ENCODE measurements at regions of chr18 and their contacts with region 1.

Region 1: GRCh38 chr18:830315-830901 is 18.4 kb upstream of the YES1 start:
- DNase-seq: no peak
- ATAC-seq: peak; percentile 45
- H3K4me3 Mint-ChIP-seq: peak overlapping the region; percentile 15
- H3K27ac Mint-ChIP-seq: peak overlapping the region; percentile 66
- H3K4me1 Mint-ChIP-seq: peaks cover 22% of the 10 kb centered on the region
- H3K27me3 Mint-ChIP-seq: peaks cover 7% of the 10 kb centered on the region
- CTCF ChIP-seq: no peak

Region 2: DNA sequence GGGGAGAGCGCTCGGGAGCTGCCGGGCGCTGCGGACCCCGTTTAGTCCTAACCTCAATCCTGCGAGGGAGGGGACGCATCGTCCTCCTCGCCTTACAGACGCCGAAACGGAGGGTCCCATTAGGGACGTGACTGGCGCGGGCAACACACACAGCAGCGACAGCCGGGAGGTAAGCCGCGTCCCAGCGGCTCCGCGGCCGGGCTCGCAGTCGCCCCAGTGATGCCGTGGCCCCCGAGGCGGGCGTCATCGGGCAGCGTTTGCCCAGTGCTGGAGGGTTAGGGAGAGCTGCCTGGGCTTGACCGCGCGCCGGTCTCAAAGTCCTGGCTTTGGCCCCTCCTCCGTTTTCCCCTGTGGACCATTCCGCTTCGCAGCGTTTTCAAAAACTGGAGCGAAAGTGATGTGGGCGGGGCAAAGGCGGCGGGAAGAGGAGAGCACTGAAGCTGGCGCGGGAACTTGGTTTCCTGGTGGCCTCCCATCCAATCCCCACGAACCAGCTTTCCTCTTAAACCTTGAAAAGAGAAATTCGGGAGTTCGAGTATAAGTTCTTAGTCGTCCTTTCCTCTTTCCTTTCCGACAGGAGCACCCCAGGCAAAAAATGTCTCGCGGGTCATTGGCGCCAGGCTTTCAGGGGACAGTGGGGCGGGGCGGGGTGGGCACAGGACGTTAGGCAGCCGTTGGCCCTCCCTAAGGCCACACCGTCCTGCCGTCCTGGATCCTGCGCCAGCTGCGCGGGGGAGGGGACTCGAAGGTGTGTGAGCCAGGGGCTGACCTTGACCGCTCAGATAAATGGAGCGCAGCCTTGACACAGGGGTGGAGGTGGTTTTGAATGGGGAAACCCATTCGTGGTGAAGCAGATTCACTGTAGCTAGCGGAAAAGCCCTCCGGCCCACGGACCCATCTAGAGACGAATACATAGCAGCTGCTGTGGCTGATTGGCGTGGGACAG is 172.1 kb before region 1 on chr18:
- CTCF ChIA-PET with region 1: interaction called, 10 read pairs
- POLR2A ChIA-PET with region 1: no interaction called
- DNase-seq: peak; percentile 90
- ATAC-seq: peak; percentile 80
- H3K4me3 Mint-ChIP-seq: peak overlapping the region; percentile 88
- H3K27ac Mint-ChIP-seq: peak overlapping the region; percentile 76
- H3K4me1 Mint-ChIP-seq: peaks cover 40% of the 10 kb centered on the region
- H3K27me3 Mint-ChIP-seq: no peaks in the 10 kb centered on the region
- CTCF ChIP-seq: no peak

Region 3: GRCh38 chr18:686339-687111 is 143.9 kb before region 1 on chr18:
- CTCF ChIA-PET with region 1: interaction called, 30 read pairs
- POLR2A ChIA-PET with region 1: no interaction called
- DNase-seq: peak; percentile 54
- ATAC-seq: peak; percentile 88
- H3K4me3 Mint-ChIP-seq: peak overlapping the region; percentile 30
- H3K27ac Mint-ChIP-seq: peak overlapping the region; percentile 44
- H3K4me1 Mint-ChIP-seq: peaks cover 35% of the 10 kb centered on the region
- H3K27me3 Mint-ChIP-seq: no peaks in the 10 kb centered on the region
- CTCF ChIP-seq: no peak

Region 4: DNA sequence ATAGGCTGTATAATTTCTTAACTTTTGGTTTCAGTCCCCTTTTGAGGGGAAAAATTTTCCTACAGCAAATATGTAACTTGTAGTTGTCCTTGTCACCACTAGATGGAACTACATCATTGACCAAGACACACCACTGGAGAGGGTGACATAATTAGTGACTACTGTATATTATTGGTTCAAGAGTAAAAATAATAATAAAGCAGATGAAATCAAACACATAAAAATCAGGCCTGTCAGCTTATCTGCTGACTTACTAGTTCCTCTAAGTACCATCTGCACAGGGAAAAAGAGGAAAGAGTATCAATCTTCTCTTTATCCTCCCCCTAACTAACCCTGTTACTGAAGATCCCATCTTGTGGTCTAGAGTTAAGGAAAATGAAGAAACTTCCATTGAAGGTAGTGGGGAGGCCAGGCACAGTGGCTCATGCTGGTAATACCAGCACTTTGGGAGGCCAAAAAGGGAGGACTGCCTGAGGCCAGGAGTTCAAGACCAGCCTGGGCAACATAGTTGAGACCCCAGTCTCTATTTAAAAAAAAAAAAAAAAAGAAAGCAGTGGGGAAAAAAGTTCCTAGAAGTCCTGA is 88.4 kb before region 1 on chr18:
- CTCF ChIA-PET with region 1: interaction called, 12 read pairs
- POLR2A ChIA-PET with region 1: no interaction called
- DNase-seq: no peak
- ATAC-seq: peak; percentile 66
- H3K4me3 Mint-ChIP-seq: no peak overlapping the region
- H3K27ac Mint-ChIP-seq: no peak overlapping the region
- H3K4me1 Mint-ChIP-seq: no peaks in the 10 kb centered on the region
- H3K27me3 Mint-ChIP-seq: no peaks in the 10 kb centered on the region
- CTCF ChIP-seq: peak; percentile 68

Measured in WTC11 (cell line).